Activated CD4-positive, alpha-beta T cell treated with anti-CD3 and anti-CD28 coated beads for 36 hours (primary cell): ENCODE measurements at regions of chr6 and their contacts with region 1.

Region 1: DNA sequence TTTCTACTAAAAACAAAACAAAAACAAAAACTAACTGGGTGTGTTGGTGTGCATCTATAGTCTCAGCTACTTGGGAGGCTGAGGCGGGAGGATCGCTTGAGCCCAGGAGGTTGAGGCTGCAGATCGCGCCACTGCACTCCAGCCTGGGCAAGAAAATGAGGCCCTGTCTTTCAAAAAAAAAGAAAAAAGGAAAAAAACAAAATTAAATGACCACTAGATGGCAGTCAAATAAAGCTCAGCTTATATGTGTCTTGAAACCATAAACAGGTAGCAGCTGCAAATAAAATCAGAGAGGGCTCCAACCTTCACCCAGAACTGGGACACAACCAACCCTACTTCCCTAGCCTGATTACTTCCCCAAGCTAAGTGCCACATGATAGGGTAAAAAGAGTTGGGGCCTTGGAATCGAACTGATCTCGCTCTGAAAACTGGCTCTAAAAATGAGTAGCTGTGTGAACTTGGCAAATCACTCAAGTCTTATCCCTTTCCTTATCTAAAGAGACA is 67.1 kb upstream of the ADGRF4 start:
- DNase-seq: peak; percentile 30
- ATAC-seq: peak; percentile 68
- H3K4me3 Mint-ChIP-seq: no peak overlapping the region
- H3K27ac Mint-ChIP-seq: no peak overlapping the region
- H3K4me1 Mint-ChIP-seq: peaks cover 11% of the 10 kb centered on the region
- H3K27me3 Mint-ChIP-seq: no peaks in the 10 kb centered on the region

Region 2: GRCh38 chr6:47134476-47135189 is 496.7 kb before region 1 on chr6:
- CTCF ChIA-PET with region 1: no interaction called
- POLR2A ChIA-PET with region 1: no interaction called
- intact Hi-C with region 1: no loop called
- DNase-seq: no peak
- ATAC-seq: no peak
- H3K4me3 Mint-ChIP-seq: no peak overlapping the region
- H3K27ac Mint-ChIP-seq: no peak overlapping the region
- H3K4me1 Mint-ChIP-seq: peaks cover 15% of the 10 kb centered on the region
- H3K27me3 Mint-ChIP-seq: peaks cover 6% of the 10 kb centered on the region

Region 3: DNA sequence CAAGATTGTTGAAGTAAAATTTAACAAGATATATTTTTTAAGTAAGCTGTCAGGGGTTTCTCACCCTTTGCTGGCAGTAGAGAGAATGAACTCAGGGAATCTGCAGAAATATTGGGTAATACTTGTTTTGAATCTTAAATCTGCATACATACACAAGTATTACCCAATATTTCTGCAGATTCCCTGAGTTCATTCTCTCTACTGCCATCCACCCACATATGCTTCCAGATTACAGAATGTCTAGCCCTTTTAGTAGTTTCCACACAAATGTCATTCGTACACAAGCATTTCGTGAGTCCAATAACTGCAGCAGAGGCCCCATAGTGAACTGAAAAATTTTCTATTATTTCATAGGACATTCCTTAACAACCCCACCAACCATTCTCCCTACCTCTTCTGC is 252.0 kb before region 1 on chr6:
- CTCF ChIA-PET with region 1: no interaction called
- POLR2A ChIA-PET with region 1: no interaction called
- intact Hi-C with region 1: no loop called
- DNase-seq: no peak
- ATAC-seq: no peak
- H3K4me3 Mint-ChIP-seq: no peak overlapping the region
- H3K27ac Mint-ChIP-seq: no peak overlapping the region
- H3K4me1 Mint-ChIP-seq: peaks cover 2% of the 10 kb centered on the region
- H3K27me3 Mint-ChIP-seq: peaks cover 9% of the 10 kb centered on the region

Region 4: GRCh38 chr6:47545223-47545622 is 86.1 kb before region 1 on chr6:
- CTCF ChIA-PET with region 1: no interaction called
- POLR2A ChIA-PET with region 1: no interaction called
- intact Hi-C with region 1: no loop called
- DNase-seq: no peak
- ATAC-seq: no peak
- H3K4me3 Mint-ChIP-seq: no peak overlapping the region
- H3K27ac Mint-ChIP-seq: no peak overlapping the region
- H3K4me1 Mint-ChIP-seq: peaks cover 17% of the 10 kb centered on the region
- H3K27me3 Mint-ChIP-seq: no peaks in the 10 kb centered on the region

Region 5: GRCh38 chr6:47733879-47734558 is 102.7 kb after region 1 on chr6:
- CTCF ChIA-PET with region 1: interaction called, 34 read pairs
- POLR2A ChIA-PET with region 1: no interaction called
- intact Hi-C with region 1: loop called (anchors 1 kb)
- DNase-seq: no peak
- ATAC-seq: no peak
- H3K4me3 Mint-ChIP-seq: no peak overlapping the region
- H3K27ac Mint-ChIP-seq: no peak overlapping the region
- H3K4me1 Mint-ChIP-seq: peaks cover 7% of the 10 kb centered on the region
- H3K27me3 Mint-ChIP-seq: peaks cover 13% of the 10 kb centered on the region

Region 6: GRCh38 chr6:47780510-47781356 is 149.4 kb after region 1 on chr6:
- CTCF ChIA-PET with region 1: interaction called, 83 read pairs
- POLR2A ChIA-PET with region 1: no interaction called
- intact Hi-C with region 1: loop called (anchors 1 kb)
- DNase-seq: peak; percentile 65
- ATAC-seq: peak; percentile 98
- H3K4me3 Mint-ChIP-seq: no peak overlapping the region
- H3K27ac Mint-ChIP-seq: no peak overlapping the region
- H3K4me1 Mint-ChIP-seq: peaks cover 5% of the 10 kb centered on the region
- H3K27me3 Mint-ChIP-seq: peaks cover 3% of the 10 kb centered on the region

Region 7: GRCh38 chr6:47787620-47788497 is 156.5 kb after region 1 on chr6:
- CTCF ChIA-PET with region 1: interaction called, 83 read pairs
- POLR2A ChIA-PET with region 1: no interaction called
- intact Hi-C with region 1: no loop called
- DNase-seq: peak; percentile 80
- ATAC-seq: peak; percentile 80
- H3K4me3 Mint-ChIP-seq: no peak overlapping the region
- H3K27ac Mint-ChIP-seq: no peak overlapping the region
- H3K4me1 Mint-ChIP-seq: peaks cover 3% of the 10 kb centered on the region
- H3K27me3 Mint-ChIP-seq: peaks cover 30% of the 10 kb centered on the region

Region 8: GRCh38 chr6:48135342-48136084 is 504.2 kb after region 1 on chr6:
- CTCF ChIA-PET with region 1: no interaction called
- POLR2A ChIA-PET with region 1: no interaction called
- intact Hi-C with region 1: no loop called
- DNase-seq: no peak
- ATAC-seq: no peak
- H3K4me3 Mint-ChIP-seq: no peak overlapping the region
- H3K27ac Mint-ChIP-seq: no peak overlapping the region
- H3K4me1 Mint-ChIP-seq: no peaks in the 10 kb centered on the region
- H3K27me3 Mint-ChIP-seq: no peaks in the 10 kb centered on the region